ENCODE measurements at regions of chrX and their contacts with region 1.

Region 1: DNA sequence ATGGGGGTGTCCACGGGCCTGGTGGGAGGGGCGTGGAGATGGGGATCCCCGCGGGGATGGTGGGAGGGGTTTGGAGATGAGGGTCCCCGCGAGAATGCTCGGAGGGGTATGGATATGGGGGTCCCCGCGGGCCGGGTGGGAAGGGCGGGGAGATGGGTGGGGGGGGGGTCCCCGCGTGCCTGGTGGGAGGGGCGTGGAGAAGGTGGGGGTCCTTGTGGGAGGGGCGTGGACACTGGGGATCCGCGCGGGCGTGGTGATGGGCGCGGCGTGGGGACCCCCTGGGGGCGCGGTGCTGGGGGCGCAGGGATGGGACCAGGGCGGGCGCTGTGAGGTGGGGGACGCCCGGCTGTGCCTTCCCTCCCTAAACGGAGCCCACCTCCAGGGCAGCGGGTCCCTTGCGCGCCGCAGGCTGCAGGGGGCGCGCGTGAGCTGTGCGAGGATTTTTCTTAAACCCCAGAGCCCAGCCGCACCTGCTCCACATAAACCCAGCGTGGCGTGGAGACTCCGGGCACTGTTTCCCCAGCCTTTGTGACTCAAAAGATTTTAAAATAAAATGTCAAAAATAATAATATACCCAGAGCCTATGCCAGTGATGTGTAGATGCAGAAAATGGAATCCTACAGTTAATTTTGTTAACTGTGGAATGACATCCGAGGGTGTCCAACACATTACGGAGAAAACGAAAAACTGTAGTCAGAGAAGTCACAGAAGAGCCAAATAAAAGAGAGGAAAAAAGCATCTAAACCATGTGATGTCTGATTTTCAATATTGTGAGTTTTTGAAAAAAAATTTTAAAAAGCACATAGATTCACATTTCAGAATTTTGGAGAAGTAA is 1.5 kb upstream of the ASMTL start:
- ATAC-seq: peak; percentile 22 to 58 (median 47)
- H3K4me3 ChIP-seq: peak overlapping the region; percentile 33 to 59 (median 42)
- H3K27ac ChIP-seq: no peak overlapping the region
- H3K4me1 ChIP-seq: no peaks in the 10 kb centered on the region

Region 2: GRCh38 chrX:1086444-1087409 is 367.4 kb before region 1 on chrX:
- in situ Hi-C with region 1: no loop called
- ATAC-seq: no peak
- H3K4me3 ChIP-seq: no peak overlapping the region
- H3K27ac ChIP-seq: no peak overlapping the region
- H3K4me1 ChIP-seq: no peaks in the 10 kb centered on the region

Region 3: GRCh38 chrX:1281521-1281920 is 172.6 kb before region 1 on chrX:
- in situ Hi-C with region 1: no loop called
- ATAC-seq: no peak
- H3K4me3 ChIP-seq: no peak overlapping the region
- H3K27ac ChIP-seq: no peak overlapping the region
- H3K4me1 ChIP-seq: no peaks in the 10 kb centered on the region

Region 4: GRCh38 chrX:1591102-1591900 is 137.1 kb after region 1 on chrX and contains the start of gene AKAP17A:
- in situ Hi-C with region 1: loop called in 1 of 9 experiments (anchors 25 kb)
- ATAC-seq: peak; percentile 84 to 97 (median 93)
- H3K4me3 ChIP-seq: peak within 1 kb of the TSS; percentile 45 to 95 (median 60)
- H3K27ac ChIP-seq: peak within 1 kb of the TSS; percentile 59 to 92
- H3K4me1 ChIP-seq: peaks cover 0 to 7% of the 10 kb centered on the region in 2 donors
- total RNA-seq, gene AKAP17A: 23.9 to 39.5 (median 28.0) TPM

Region 5: DNA sequence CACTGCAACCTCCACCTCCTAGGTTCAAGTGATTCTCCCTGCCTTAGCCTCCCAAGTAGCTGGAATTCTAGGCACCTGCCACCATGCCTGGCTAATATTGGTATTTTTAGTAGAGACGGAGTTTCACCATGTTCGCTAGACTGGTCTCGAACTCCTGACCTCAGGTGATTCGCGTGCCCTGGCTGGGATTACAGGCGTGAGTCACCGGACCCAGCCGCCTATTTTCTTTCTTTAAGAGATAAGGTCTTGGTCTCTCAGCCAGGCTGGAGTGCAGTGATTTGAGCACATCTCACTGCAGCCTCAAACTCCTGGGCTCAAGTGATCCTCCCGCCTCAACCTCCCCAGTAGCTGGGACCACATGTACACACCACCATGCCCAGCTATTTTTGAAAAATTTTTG is 880.1 kb after region 1 on chrX:
- in situ Hi-C with region 1: no loop called
- ATAC-seq: no peak
- H3K4me3 ChIP-seq: no peak overlapping the region
- H3K27ac ChIP-seq: no peak overlapping the region
- H3K4me1 ChIP-seq: peaks cover 0 to 2% of the 10 kb centered on the region in 2 donors

Region 6: DNA sequence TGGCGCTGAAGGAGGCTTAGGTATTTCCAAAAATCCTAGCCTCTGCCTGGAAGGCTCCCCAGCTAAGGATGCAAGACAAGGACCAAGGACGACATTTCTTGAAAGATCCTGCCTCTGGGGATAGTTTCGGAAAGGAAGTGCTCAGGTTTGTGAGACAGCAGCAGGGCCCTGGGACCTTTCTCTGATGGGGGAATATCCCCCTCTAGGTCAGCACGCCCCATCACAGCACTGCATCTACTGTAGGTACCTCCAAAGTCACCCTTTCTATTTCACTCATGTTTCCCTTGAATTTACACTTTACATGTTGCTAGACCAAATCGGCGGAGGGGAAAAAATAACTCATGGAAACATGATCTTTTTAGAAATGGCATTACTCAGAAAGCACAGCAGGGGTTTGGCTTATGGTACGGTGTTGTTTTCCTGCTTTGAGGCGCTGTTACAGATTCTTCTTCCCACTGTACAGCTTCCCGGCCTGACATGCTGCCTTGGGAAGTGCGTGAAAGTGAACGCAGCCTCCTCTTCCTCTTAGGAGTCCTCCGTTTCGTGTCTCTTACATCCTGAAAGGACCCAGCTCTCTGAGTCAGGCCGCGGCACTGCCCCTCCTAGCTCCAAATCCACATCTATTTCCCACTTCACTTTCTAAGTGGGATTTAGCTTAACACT is 1123.8 kb after region 1 on chrX:
- in situ Hi-C with region 1: loop called in 1 of 9 experiments (anchors 25 kb)
- ATAC-seq: no peak
- H3K4me3 ChIP-seq: no peak overlapping the region
- H3K27ac ChIP-seq: no peak overlapping the region
- H3K4me1 ChIP-seq: peaks cover 0 to 13% of the 10 kb centered on the region in 2 donors

Region 7: DNA sequence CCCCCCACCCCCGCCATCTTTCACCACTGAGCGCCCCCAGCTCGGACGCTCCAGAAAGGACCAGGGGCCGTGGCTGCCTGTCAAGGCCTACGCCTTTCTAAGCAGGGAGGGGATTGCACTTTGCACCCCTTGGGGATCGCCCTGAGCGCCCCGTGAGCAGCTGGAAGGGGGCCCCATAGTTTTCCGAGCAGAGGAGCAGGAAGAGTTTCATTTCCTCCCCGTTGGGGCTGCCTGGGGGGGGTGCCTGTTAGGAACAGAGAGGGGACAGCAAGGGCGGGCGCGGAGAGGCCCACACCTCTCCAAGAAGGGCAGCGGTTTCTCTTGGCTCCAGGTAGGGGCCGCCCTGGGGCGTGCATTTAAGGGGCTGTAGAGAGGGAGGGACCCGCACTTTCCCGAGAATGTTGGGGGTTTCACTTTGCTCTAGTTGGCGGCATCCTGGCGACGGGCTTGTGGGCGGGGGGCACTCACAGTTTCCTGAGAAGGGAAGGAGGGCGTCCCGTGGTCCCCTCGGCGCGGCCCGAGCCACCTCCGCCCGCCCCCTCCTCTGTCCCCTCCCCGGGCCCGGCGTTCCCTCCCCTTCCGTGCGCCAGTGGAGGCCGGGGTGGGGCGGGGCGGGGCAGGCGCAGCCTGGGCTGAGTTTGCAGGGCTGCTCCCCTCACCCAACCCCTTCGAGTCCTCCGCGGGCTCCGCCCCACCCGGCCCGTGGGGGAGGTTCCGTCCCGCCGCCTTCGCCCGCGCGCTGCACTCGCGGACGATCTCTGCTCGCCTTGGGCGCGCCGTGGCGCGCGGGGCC is 1154.7 kb after region 1 on chrX:
- in situ Hi-C with region 1: loop called in 1 of 9 experiments (anchors 25 kb)
- ATAC-seq: peak; percentile 90 to 95 (median 94)
- H3K4me3 ChIP-seq: peak overlapping the region; percentile 46 to 57 (median 54)
- H3K27ac ChIP-seq: peak overlapping the region in 1 of 2 donors; percentile 18
- H3K4me1 ChIP-seq: no peaks in the 10 kb centered on the region